ENCODE measurements at regions of chr1 and their contacts with region 1.

Region 1: DNA sequence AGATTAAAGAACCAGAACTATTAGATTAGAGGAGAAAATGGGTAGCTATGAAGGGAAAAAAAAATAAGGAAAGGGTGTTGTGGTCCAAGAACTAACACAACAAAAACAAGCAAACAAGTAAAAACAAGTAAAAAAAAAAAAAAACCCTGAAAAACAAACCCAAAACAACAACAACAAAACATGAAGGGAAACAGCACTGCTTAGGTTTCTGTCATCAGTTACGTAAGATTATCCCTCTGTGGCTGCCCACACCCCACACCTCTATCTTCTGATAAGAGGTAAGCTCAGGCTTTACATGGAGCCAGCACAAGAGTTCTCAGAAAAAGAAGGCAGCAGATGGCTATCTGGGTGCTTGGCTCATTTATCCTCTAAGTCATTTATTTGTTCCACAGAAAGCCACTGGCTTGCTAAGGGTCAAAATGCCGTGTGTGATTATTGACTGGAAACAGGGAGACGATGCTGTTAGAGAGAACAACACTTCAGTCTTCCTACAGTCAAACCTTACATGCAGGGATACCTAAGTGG is 57.5 kb downstream of the KIAA0319L start:
- DNase-seq: no peak
- ATAC-seq: no peak; the same call in 2 of the 3 replicates
- H3K4me3 ChIP-seq: no peak overlapping the region
- H3K27ac ChIP-seq: no peak overlapping the region
- H3K4me1 ChIP-seq: no peaks in the 10 kb centered on the region
- H3K27me3 ChIP-seq: no peaks in the 10 kb centered on the region
- CTCF ChIP-seq: no peak
- EP300 ChIP-seq: no peak
- POLR2A ChIP-seq: no peak
- RAD21 ChIP-seq: no peak

Region 2: GRCh38 chr1:35488336-35488735 is 11.4 kb before region 1 on chr1:
- CTCF ChIA-PET with region 1: interaction called, 5 read pairs
- POLR2A ChIA-PET with region 1: interaction called, 3 read pairs
- RAD21 ChIA-PET with region 1: no interaction called
- SMC1A ChIA-PET with region 1: interaction called, 16 read pairs
- in situ Hi-C with region 1: no loop called
- intact Hi-C with region 1: no loop called
- DNase-seq: no peak
- ATAC-seq: no peak
- H3K4me3 ChIP-seq: no peak overlapping the region
- H3K27ac ChIP-seq: no peak overlapping the region
- H3K4me1 ChIP-seq: 0 out of 2 replicates have a peak, but pooled peaks cover 3% of the 10 kb centered on the region
- H3K27me3 ChIP-seq: no peaks in the 10 kb centered on the region
- CTCF ChIP-seq: no peak
- EP300 ChIP-seq: no peak
- POLR2A ChIP-seq: no peak
- RAD21 ChIP-seq: no peak

Region 3: DNA sequence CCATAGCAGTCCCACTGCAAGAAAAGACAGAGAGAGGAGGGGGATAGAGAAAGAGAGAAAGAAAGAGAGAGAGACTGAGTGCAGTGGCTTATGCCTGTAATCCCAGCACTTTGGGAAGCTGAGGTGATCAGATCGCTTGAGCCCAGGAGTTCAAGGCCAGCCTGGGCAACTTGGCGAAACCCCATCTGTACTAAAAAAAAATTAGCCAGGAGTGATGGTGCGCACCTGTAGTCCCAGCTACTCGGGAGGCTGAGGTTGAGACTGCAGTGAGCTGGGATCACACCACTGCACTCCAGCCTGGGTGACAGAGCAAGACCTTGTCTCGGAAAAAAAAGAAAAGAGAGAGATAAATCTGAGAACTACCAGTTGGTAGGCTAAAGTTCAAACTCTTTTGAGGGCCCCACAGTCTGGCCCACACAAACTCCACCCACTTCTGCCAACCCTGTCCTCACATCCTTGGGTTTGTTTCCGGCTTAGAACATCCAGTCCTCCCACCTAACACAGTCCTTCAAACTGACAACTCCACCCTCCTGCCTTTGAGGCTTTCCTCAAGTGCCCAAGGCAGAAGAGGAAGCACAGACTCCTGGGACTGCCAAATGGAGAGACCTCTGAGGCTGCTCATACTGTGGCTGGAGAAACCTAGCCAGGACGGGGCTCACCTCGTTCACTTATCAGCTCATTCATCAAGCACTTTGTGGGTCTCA is 93.4 kb after region 1 on chr1:
- CTCF ChIA-PET with region 1: no interaction called
- POLR2A ChIA-PET with region 1: no interaction called
- RAD21 ChIA-PET with region 1: no interaction called
- SMC1A ChIA-PET with region 1: no interaction called
- in situ Hi-C with region 1: no loop called
- intact Hi-C with region 1: no loop called
- DNase-seq: no peak
- ATAC-seq: no peak
- H3K4me3 ChIP-seq: no peak overlapping the region
- H3K27ac ChIP-seq: no peak overlapping the region
- H3K4me1 ChIP-seq: no peaks in the 10 kb centered on the region
- H3K27me3 ChIP-seq: no peaks in the 10 kb centered on the region
- CTCF ChIP-seq: no peak
- EP300 ChIP-seq: no peak
- POLR2A ChIP-seq: no peak
- RAD21 ChIP-seq: no peak

Region 4: DNA sequence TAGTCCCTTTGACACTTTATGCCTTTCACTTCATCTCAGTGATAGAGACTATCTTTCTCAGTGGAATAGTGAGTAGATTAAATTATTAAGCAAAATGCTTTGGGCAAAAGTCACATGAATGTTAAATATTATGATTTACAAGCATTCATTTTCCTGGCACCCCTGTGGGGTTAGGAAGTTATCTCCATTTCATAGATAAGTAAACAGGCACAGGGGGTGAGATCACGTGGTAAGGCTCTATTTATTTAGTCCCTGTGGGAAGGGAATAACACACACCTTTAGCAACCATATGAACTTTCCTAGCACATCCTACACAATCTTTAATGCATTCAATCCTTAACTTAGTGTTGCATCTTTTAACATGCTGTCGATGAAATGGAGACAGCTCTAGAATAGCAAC is 129.3 kb after region 1 on chr1:
- CTCF ChIA-PET with region 1: no interaction called
- POLR2A ChIA-PET with region 1: no interaction called
- RAD21 ChIA-PET with region 1: no interaction called
- SMC1A ChIA-PET with region 1: no interaction called
- in situ Hi-C with region 1: no loop called
- intact Hi-C with region 1: no loop called
- DNase-seq: no peak
- ATAC-seq: no peak
- H3K4me3 ChIP-seq: no peak overlapping the region
- H3K27ac ChIP-seq: no peak overlapping the region
- H3K4me1 ChIP-seq: no peaks in the 10 kb centered on the region
- H3K27me3 ChIP-seq: no peaks in the 10 kb centered on the region
- CTCF ChIP-seq: no peak
- EP300 ChIP-seq: no peak
- POLR2A ChIP-seq: no peak
- RAD21 ChIP-seq: no peak

Measured in GM12878 (cell line).